Heart left ventricle (tissue), 16 donors: ENCODE measurements at regions of chr12 and their contacts with region 1.

Region 1: DNA sequence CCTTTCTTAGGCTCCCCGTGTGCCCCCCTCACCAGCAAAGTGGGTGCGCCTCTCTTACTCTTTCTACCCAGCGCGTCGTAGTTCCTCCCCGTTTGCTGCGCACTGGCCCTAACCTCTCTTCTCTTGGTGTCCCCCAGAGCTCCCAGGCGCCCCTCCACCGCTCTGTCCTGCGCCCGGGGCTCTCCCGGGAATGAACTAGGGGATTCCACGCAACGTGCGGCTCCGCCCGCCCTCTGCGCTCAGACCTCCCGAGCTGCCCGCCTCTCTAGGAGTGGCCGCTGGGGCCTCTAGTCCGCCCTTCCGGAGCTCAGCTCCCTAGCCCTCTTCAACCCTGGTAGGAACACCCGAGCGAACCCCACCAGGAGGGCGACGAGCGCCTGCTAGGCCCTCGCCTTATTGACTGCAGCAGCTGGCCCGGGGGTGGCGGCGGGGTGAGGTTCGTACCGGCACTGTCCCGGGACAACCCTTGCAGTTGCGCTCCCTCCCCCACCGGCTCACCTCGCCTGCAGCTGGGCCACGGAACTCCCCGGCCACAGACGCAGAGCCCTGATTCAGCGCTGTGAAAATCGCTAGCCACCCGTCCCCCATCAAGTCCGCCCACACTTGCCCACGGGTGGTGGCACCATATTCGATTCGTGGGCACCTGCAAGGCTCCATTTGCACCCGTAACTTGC is 1.3 kb downstream of the TMEM233 start:
- DNase-seq: peak in 4 of 5 donors; percentile 33 to 57 (median 44)
- ATAC-seq: peak; percentile 48 to 86 (median 78)
- H3K4me3 ChIP-seq: peak overlapping the region; percentile 11 to 69 (median 56)
- H3K27ac ChIP-seq: peak overlapping the region in 11 of 12 donors; percentile 18 to 85 (median 58)
- H3K4me1 ChIP-seq: peaks cover 0 to 20% (median 10%) of the 10 kb centered on the region in 12 donors
- H3K27me3 ChIP-seq: peaks cover 0 to 55% (median 22%) of the 10 kb centered on the region in 9 donors
- CTCF ChIP-seq: no peak
- POLR2A ChIP-seq: no peak

Region 2: DNA sequence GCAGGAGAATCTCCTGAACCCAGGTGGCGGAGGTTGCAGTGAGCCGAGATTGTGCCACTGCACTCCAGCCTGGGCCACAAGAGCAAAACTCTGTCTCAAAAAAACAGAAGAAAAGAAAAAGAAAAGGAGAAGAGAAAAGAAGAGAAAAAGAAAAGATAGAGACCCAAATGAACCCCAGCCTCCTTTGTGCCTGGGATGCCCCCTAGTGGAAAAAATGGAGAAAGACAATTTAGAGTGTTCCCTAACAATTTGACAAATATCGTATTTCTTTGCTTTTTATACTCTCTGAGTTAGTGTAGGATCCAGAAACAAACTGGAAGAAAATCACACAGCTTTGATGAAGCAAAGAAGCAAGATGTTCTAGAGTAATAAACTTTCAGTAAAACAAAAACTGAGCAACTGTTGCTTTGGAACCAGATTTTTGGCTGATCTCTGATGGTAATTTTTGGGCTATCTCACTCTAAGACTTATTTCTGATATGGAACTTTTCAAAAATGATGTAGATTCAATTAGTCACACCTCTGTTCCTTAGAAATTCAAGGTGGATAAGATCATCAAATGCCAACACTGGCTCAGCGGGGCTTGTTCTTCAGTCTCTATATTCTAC is 54.4 kb after region 1 on chr12:
- intact Hi-C with region 1: loop called in 3 of 10 experiments (anchors 5 to 10 kb)
- DNase-seq: no peak
- ATAC-seq: no peak
- H3K4me3 ChIP-seq: no peak overlapping the region
- H3K27ac ChIP-seq: no peak overlapping the region
- H3K4me1 ChIP-seq: no peaks in the 10 kb centered on the region
- H3K27me3 ChIP-seq: no peaks in the 10 kb centered on the region
- CTCF ChIP-seq: peak; percentile 46 to 81 (median 68)
- POLR2A ChIP-seq: no peak